Activated CD4-positive, alpha-beta T cell treated with anti-CD3 and anti-CD28 coated beads for 36 hours (primary cell): ENCODE measurements at regions of chr17 and their contacts with region 1.

Region 1: DNA sequence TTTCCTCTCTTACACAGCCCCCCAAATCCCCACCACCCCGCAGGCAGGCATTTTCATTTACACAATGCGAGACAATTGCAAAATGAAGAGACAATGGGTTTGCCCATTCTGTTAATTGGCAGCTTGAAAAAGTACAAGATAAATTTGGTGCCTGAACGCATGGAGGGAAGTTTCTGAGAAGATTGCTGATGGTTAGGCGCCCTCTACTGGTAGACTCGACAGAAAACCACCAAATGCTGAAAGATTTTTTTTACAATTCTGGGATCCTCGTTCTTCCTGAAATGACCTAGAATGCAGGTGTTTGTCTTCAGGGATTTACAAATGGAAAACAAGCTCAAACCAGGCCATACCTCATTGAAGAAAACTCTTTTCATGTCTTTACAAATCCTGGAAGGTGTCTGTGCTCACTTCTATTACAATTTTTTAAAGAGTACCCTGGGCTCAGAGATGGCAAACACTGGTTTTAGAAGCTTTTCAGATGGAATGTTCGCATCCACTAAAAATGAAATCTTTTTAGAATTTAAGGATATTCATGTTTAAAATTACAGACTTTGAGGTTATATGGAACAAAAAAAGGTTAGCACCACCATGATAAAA is 338.5 kb downstream of the PMP22 start:
- DNase-seq: peak; percentile 67
- ATAC-seq: no peak
- H3K4me3 Mint-ChIP-seq: no peak overlapping the region
- H3K27ac Mint-ChIP-seq: no peak overlapping the region
- H3K4me1 Mint-ChIP-seq: no peaks in the 10 kb centered on the region
- H3K27me3 Mint-ChIP-seq: peaks cover 12% of the 10 kb centered on the region

Region 2: GRCh38 chr17:13031718-13032350 is 1894.8 kb before region 1 on chr17:
- CTCF ChIA-PET with region 1: interaction called, 3 read pairs
- POLR2A ChIA-PET with region 1: no interaction called
- intact Hi-C with region 1: loop called in 1 of 2 experiments (anchors 10 kb)
- DNase-seq: peak; percentile 66
- ATAC-seq: peak; percentile 80
- H3K4me3 Mint-ChIP-seq: no peak overlapping the region
- H3K27ac Mint-ChIP-seq: no peak overlapping the region
- H3K4me1 Mint-ChIP-seq: peaks cover 7% of the 10 kb centered on the region
- H3K27me3 Mint-ChIP-seq: peaks cover 5% of the 10 kb centered on the region

Region 3: DNA sequence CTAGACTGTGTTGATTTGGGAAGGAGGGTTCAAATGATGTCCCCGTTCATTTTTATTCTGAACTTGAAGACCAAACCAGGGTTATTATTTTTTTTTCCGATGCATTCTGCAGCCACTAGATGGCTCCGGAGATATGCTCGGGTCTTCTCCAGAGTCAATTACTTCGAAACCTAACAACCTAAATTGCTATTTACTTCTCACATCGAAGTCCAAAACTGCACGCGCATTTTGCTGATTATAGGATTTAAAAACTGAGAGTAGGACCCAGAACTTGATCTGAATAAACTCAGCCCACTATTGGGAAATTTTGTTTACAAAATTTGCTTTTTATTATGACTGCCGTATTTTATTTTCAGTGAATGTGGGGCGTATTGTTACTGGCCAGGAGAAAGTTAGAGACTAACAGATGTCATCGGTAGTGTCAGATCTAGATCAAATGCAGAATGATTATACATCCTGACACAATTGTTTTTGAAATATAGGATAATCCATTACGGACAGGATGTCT is 1588.7 kb before region 1 on chr17:
- CTCF ChIA-PET with region 1: interaction called, 5 read pairs
- POLR2A ChIA-PET with region 1: no interaction called
- intact Hi-C with region 1: loop called (anchors 5 kb)
- DNase-seq: peak; percentile 26
- ATAC-seq: no peak
- H3K4me3 Mint-ChIP-seq: no peak overlapping the region
- H3K27ac Mint-ChIP-seq: no peak overlapping the region
- H3K4me1 Mint-ChIP-seq: peaks cover 3% of the 10 kb centered on the region
- H3K27me3 Mint-ChIP-seq: peaks cover 20% of the 10 kb centered on the region

Region 4: GRCh38 chr17:13995856-13996271 is 930.8 kb before region 1 on chr17:
- CTCF ChIA-PET with region 1: no interaction called
- POLR2A ChIA-PET with region 1: no interaction called
- intact Hi-C with region 1: no loop called
- DNase-seq: no peak
- ATAC-seq: no peak
- H3K4me3 Mint-ChIP-seq: no peak overlapping the region
- H3K27ac Mint-ChIP-seq: no peak overlapping the region
- H3K4me1 Mint-ChIP-seq: no peaks in the 10 kb centered on the region
- H3K27me3 Mint-ChIP-seq: no peaks in the 10 kb centered on the region

Region 5: GRCh38 chr17:14211801-14212200 is 714.8 kb before region 1 on chr17:
- CTCF ChIA-PET with region 1: interaction called, 3 read pairs
- POLR2A ChIA-PET with region 1: no interaction called
- intact Hi-C with region 1: loop called in 1 of 2 experiments (anchors 5 kb)
- DNase-seq: peak; percentile 61
- ATAC-seq: peak; percentile 39
- H3K4me3 Mint-ChIP-seq: no peak overlapping the region
- H3K27ac Mint-ChIP-seq: no peak overlapping the region
- H3K4me1 Mint-ChIP-seq: peaks cover 13% of the 10 kb centered on the region
- H3K27me3 Mint-ChIP-seq: no peaks in the 10 kb centered on the region

Region 6: DNA sequence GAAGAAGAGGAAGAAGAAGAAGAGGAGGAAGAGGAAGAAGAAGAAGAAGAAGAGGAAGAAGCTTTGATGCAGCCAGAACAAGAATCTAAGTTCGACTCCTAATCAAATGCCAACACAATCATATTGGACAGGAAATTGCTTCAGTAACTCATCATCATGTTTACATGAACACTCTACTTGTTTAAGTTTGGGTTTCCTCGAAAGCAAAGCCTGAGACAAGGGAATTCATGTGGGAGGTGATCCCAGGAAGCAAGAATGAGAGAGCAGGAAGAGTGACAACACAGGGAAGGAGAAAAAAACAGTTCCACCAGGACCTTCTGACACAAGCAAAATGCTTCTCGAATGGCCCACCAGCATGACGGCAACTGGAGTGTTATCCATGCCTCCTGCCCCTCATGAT is 59.5 kb after region 1 on chr17:
- CTCF ChIA-PET with region 1: no interaction called
- POLR2A ChIA-PET with region 1: no interaction called
- intact Hi-C with region 1: loop called in 1 of 2 experiments (anchors 10 kb)
- DNase-seq: no peak
- ATAC-seq: no peak
- H3K4me3 Mint-ChIP-seq: no peak overlapping the region
- H3K27ac Mint-ChIP-seq: no peak overlapping the region
- H3K4me1 Mint-ChIP-seq: no peaks in the 10 kb centered on the region
- H3K27me3 Mint-ChIP-seq: peaks cover 11% of the 10 kb centered on the region